Psoas muscle (tissue), 8 donors: ENCODE measurements at regions of chr10 and their contacts with region 1.

Region 1: GRCh38 chr10:89659143-89660131 is 14.4 kb upstream of the PANK1 start:
- DNase-seq: no peak
- ATAC-seq: no peak
- H3K4me3 ChIP-seq: no peak overlapping the region
- H3K27ac ChIP-seq: no peak overlapping the region
- H3K4me1 ChIP-seq: peaks cover 17% of the 10 kb centered on the region
- H3K27me3 ChIP-seq: no peaks in the 10 kb centered on the region
- CTCF ChIP-seq: no peak

Region 2: GRCh38 chr10:89158446-89158845 is 501.0 kb before region 1 on chr10:
- intact Hi-C with region 1: loop called in 1 of 2 experiments (anchors 5 kb)
- DNase-seq: no peak
- ATAC-seq: no peak
- H3K4me3 ChIP-seq: no peak overlapping the region
- H3K27ac ChIP-seq: no peak overlapping the region
- H3K4me1 ChIP-seq: no peaks in the 10 kb centered on the region
- H3K27me3 ChIP-seq: no peaks in the 10 kb centered on the region
- CTCF ChIP-seq: no peak